MCF 10A (cell line): ENCODE measurements at regions of chr12 and their contacts with region 1.

Region 1: DNA sequence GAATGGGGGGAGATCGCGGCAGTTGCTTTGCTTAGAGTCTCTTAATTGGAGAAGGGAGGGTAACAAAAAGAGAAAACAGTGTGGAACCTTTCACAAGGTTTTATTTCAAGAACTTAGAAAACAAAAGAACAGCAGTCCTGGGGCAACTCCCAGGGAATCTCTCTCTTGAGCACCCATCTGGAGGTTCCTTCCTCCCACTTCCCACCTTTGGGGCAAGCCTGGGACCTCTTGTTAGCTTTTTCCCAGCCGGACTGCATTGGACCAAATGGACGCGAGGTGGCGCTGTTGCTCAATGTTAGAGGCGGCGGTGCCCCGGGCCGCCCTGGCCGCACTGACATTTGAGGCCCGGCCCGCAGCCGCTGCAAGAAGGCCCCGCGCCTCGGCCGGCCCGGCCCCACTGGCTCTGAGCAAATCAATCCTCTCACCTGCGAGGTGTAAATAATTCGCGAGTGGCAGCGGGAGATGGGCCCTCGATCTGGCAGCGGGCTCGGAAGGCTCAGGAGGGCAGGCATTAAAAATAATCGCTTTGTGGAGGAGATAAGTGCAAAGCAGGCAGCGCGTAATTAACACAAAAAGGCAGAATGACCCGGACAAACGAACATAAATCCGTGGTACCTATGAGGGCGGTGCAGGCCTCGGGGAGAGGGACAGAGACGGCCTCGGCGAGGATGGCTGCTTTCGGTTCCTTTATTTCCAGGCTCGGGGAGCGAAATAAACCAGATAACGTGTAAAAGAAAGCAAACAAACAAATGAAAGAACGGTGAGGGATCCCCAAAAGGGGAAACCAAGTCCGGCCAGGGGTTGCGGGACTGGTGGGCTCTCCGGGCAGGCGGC is 2.7 kb upstream of the HOXC8 start:
- DNase-seq: peak; percentile 88
- H3K4me3 Mint-ChIP-seq: no peak overlapping the region
- H3K27ac Mint-ChIP-seq: no peak overlapping the region
- H3K4me1 Mint-ChIP-seq: peaks cover 25% of the 10 kb centered on the region
- H3K27me3 Mint-ChIP-seq: no peaks in the 10 kb centered on the region
- CTCF ChIP-seq: peak; percentile 96

Region 2: DNA sequence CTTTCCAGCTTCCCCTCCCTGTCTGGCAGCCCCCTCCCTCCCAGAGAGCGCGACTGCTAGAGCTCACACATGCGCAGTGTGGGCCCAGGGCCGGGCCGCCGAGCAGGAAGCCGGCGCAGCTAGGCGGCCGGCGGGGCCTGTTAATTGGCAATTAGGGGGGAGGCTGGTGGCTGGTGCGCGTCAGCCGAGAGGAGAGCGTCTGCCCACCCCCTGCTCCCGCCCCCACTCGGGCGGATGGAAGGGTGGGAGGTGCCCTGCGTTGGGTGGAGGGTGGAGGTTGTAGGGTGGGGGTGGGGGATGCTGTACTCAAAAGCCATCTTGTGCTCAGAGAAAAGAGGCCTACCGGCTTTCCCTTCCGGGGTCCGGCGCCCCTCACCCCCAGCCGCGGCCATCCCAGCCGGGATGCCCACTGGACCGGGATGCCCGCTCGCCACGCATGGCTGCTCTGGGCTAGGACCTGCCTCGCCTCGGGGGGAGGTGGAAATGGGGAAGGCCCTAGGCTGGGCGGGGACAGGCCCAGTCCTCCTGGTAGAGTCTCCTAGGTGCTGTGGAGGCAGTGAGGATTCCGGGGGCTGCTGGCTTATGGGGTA is 11.9 kb after region 1 on chr12:
- CTCF ChIA-PET with region 1: interaction called, 15 read pairs
- POLR2A ChIA-PET with region 1: interaction called, 37 read pairs
- intact Hi-C with region 1: loop called (anchors 1 kb)
- DNase-seq: peak; percentile 96
- H3K4me3 Mint-ChIP-seq: peak overlapping the region; percentile 98
- H3K27ac Mint-ChIP-seq: peak overlapping the region; percentile 98
- H3K4me1 Mint-ChIP-seq: peaks cover 23% of the 10 kb centered on the region
- H3K27me3 Mint-ChIP-seq: no peaks in the 10 kb centered on the region
- CTCF ChIP-seq: no peak

Region 3: DNA sequence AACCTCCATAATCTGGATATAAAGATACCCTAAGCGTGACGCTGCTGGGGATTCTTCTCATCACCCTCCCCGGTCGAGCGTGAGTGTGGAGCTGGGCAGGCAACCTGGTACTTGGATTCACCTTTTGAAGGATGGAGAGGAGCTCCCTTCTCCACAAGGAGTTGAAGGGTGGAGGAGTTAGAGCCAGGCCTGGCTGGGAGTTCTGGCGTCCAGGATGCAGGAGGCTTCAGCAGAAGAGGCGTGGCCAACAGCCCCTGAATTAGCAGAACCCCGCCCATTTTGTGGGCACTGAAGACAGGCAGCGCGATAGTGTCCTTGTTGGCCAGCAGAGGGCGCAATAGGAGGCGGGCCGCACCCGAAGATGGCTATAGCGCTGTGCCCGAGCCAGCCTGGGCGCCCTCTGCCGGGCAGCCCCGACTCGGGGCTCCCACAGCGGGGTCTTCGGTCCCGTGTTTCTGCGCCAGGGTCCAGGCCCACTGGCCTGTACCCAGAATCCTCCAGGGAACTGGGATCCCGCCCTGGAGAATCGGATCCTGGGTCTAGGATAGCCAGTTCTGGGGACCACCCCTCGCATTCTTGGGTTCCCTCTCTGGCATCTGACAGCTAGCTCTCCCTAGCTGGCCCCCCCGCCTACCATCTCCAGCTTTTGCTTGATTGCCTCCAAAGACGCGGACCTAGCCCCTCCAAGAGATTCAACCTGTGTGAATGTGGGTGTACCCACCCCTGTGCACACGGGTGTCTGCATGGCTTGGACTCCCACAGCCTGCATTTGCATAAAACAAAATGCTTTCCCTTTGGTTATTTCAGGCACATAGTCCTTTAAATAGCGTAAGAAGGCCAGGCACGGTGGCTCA is 208.7 kb after region 1 on chr12:
- CTCF ChIA-PET with region 1: interaction called, 200 read pairs
- POLR2A ChIA-PET with region 1: no interaction called
- intact Hi-C with region 1: no loop called
- DNase-seq: peak; percentile 93
- H3K4me3 Mint-ChIP-seq: peak overlapping the region; percentile 26
- H3K27ac Mint-ChIP-seq: no peak overlapping the region
- H3K4me1 Mint-ChIP-seq: peaks cover 12% of the 10 kb centered on the region
- H3K27me3 Mint-ChIP-seq: no peaks in the 10 kb centered on the region
- CTCF ChIP-seq: peak; percentile 99